ENCODE measurements at regions of chr5 and their contacts with region 1.

Region 1: GRCh38 chr5:122515709-122516431 is 203.8 kb downstream of the SNCAIP start:
- DNase-seq: peak in 1 of 2 experiments; percentile 50
- H3K4me3 ChIP-seq: no peak overlapping the region
- H3K27ac ChIP-seq: peak overlapping the region; percentile 2; the same call in 1 of the 2 replicates
- H3K4me1 ChIP-seq: peaks cover 0 to 4% (median 0%) of the 10 kb centered on the region in 4 experiments; a peak in 4 of 7 replicates
- H3K27me3 ChIP-seq: no peaks in the 10 kb centered on the region
- CTCF ChIP-seq: peak; percentile 68 to 91 (median 84)
- EP300 ChIP-seq: no peak
- POLR2A ChIP-seq: no peak
- RAD21 ChIP-seq: peak; percentile 99 to 100

Region 2: DNA sequence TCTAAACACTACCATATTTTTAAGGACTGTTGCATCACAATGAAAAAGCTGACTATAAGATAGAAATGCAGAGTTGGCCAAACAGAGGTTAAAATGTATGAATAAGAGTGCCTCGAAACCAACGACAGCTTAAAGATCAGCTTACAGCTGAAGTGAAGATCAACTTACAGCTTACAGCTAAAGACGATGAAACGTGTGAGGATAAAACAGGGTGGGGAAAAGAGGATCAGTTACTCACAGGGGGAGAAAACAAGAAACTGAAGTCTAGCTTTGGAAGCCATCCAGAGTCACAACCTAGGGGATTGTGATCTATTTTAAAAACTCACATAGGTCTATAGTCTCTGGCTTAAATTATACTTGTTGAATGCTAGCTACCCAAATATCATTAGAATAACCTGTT is 16.2 kb after region 1 on chr5:
- CTCF ChIA-PET with region 1: interaction called, 10 read pairs
- POLR2A ChIA-PET with region 1: no interaction called
- DNase-seq: no peak
- H3K4me3 ChIP-seq: no peak overlapping the region
- H3K27ac ChIP-seq: no peak overlapping the region
- H3K4me1 ChIP-seq: no peaks in the 10 kb centered on the region
- H3K27me3 ChIP-seq: no peaks in the 10 kb centered on the region
- CTCF ChIP-seq: no peak
- EP300 ChIP-seq: no peak
- POLR2A ChIP-seq: no peak
- RAD21 ChIP-seq: no peak

Measured in H1 (cell line).